Cardiac septum (tissue), 1 donor: ENCODE measurements at regions of chr2 and their contacts with region 1.

Region 1: DNA sequence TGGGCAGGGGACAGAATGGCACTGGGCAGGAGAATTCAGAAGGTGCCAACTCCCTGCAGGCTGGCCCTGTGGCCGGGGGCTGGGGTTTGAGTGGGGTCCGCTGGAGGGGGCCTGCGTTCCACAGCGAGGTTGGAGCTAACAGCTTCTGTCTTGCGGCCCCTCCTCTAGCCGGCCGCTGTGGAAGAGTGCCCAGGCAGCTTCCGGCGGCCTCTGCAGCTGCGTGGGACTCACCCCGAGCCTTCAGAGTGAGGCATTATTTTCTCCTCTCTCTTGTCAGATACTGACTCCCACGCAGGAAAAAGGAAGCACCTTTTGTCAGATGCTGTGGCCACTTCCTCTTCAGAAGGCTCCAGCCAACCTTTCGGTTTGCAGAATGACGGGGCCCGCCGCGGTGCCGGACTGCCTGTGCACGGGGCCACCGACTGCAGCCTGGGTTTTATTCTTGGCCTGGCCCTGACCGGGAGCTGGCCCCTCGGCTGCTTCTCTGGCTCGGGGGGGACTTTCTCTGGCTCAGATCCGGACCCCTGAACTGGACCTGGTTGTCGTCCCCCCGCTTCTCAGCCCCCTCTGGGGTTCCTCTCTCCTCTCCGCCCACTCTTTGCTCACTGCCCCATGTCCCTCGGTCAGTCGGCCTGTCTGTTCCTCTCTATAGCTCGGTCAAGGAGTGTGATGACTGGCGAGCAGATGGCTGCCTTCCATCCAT is 40.1 kb downstream of the ARHGAP25 start:
- DNase-seq: peak; percentile 94

Region 2: DNA sequence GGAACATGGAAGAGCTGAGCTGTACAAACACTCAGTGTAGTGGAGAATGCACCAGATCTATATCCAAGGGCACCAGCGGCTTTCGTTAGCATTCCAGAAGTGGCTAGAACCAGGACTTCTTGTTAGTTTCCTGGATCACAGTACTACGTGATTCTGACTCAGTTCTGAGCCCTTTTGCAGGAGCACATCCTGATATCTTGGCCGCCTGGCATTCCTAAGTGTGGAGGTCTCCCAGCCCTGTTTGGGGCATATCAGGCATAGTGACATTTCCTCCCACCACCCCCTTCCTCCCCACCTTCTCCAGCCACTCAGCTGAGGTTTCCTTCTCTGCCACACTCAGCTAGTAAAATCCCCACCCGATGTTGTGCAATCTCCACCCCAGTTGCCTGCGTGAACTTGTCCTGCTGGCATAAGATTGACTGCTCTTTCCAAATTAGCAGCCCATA is 33.1 kb after region 1 on chr2:
- intact Hi-C with region 1: no loop called
- DNase-seq: no peak

Region 3: GRCh38 chr2:68828887-68829708 is 54.4 kb after region 1 on chr2:
- intact Hi-C with region 1: loop called (anchors 2 kb)
- DNase-seq: peak; percentile 97